ENCODE measurements at regions of chr22 and their contacts with region 1.

Region 1: DNA sequence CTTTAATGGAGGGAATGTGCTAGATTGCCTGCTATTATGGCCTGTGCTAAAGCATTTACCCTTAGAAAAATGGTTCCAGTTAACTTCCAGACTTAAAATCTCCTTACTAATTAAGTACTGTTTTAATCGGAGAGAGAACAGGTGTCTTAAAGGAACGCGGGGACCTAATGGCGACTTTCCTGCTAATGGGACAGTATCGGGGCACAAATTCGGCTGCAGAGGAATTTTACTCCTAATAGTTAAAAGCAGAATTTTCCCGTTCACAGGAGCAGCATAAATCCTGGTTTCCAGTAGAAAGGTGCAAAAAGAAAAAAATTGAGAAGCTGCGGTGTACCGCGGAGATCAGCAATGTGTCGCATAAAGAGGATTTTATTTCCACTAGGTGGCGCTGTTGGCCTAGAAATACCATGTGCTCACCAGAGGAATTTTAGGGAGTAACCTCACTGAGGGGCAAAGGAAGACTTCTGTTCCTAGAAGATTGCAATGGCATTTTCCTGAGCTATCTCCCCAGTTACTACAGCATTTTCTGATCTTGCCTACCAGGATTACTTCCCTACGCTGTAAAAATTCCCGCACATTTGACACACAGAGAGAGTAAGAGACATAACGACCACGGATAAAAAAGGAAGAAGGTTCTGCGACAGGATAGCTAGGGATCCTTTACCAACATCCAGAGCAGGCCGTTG is 44.5 kb downstream of the ZNF280B start:
- DNase-seq: peak; percentile 57
- ATAC-seq: peak; percentile 88
- H3K4me3 ChIP-seq: no peak overlapping the region
- H3K27ac ChIP-seq: no peak overlapping the region
- H3K4me1 ChIP-seq: no peaks in the 10 kb centered on the region
- H3K27me3 ChIP-seq: peaks cover 1% of the 10 kb centered on the region; the same call in 1 of the 2 replicates
- CTCF ChIP-seq: peak; percentile 82
- POLR2A ChIP-seq: no peak
- RAD21 ChIP-seq: peak; percentile 83

Region 2: GRCh38 chr22:22144858-22145257 is 319.1 kb before region 1 on chr22:
- CTCF ChIA-PET with region 1: no interaction called
- POLR2A ChIA-PET with region 1: no interaction called
- dilution Hi-C with region 1: no loop called
- in situ Hi-C with region 1: no loop called
- intact Hi-C with region 1: no loop called
- DNase-seq: peak; percentile 24
- ATAC-seq: 0 out of 2 replicates have a peak, but pooled peaks have one; percentile 48
- H3K4me3 ChIP-seq: no peak overlapping the region
- H3K27ac ChIP-seq: no peak overlapping the region
- H3K4me1 ChIP-seq: no peaks in the 10 kb centered on the region
- H3K27me3 ChIP-seq: peaks cover 32% of the 10 kb centered on the region
- CTCF ChIP-seq: peak; percentile 41; the same call in 1 of the 2 replicates
- POLR2A ChIP-seq: no peak
- RAD21 ChIP-seq: peak; percentile 25; the same call in 1 of the 2 replicates

Region 3: DNA sequence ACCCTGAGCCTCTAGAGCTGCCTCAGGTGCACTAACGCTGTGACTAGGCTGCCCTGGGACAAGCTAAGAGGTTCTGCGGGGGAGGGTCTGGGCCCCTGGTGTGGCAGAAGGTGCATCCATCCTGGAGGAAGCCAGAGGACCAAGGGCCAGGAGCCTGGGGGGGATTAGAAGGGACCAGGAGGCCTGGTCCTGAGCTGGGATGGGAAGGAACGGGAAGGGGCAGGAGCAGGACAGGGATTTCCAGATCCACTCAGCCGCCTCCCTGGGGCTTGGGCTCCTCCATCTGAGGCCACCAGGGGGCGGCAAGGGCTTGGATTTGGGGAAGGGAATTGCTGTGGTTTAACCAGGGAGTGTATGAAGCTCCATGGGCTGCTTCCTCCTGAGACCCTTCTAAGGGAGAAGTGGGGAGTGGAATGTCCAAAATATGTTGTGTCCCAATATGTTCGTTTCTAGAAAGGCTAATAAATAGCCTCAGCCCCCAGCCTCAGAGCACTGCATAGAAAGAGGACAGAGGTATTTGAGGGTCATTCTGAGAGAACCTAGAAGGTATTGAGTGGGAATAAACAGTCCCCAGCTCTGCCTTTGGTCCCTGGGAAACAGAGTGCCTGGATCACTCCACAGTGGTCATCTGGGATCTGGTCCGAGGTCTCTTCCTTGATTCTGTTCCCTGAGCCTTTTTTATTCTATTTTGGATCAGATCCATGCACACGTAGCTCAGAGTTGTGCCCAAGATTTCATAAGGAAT is 112.4 kb after region 1 on chr22:
- CTCF ChIA-PET with region 1: no interaction called
- POLR2A ChIA-PET with region 1: no interaction called
- dilution Hi-C with region 1: no loop called
- in situ Hi-C with region 1: loop called (anchors 10 kb)
- intact Hi-C with region 1: no loop called
- DNase-seq: peak; percentile 24
- ATAC-seq: peak; percentile 88
- H3K4me3 ChIP-seq: no peak overlapping the region
- H3K27ac ChIP-seq: no peak overlapping the region
- H3K4me1 ChIP-seq: no peaks in the 10 kb centered on the region
- H3K27me3 ChIP-seq: peaks cover 7% of the 10 kb centered on the region
- CTCF ChIP-seq: peak; percentile 72
- POLR2A ChIP-seq: no peak
- RAD21 ChIP-seq: peak; percentile 52

Region 4: DNA sequence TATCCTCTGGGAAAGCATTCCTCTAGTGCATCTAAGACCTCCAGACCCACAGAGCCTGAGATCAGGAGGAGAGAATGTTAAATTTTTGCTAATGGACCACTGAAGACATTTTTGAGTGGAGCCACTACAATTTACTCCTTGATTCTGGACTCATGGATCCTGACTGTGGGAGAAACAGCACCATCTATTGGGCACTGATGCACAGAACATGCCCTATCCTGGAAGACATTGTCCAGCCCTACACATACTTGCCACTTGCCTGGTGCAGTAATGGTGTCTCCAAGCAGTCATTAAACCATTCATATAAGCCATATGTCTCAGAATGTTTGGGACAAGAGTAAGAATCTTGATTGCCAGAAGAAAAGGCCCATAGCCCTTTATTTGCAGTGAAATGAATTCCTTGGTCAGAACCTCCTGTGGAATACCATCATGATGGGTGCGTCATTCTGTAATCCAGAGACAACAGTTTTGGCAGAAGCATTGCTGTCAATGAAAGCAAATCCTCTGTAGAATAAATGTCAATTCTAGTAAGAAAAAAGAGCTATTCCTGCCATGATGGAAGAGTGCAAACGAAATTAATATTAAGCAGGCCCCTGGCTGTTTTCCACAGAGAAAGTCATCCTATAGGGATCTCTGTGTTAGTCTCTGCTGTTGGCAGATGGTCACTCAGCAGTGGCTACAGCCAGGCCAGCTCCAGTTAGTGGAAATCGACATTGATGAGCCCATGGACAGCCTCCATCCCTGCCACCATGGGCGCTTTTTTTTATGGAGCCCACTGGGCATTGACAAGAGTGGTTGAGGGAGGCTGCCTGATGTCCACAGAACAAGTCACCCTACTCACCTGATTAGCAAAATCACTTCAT is 223.9 kb after region 1 on chr22:
- CTCF ChIA-PET with region 1: no interaction called
- POLR2A ChIA-PET with region 1: no interaction called
- dilution Hi-C with region 1: no loop called
- in situ Hi-C with region 1: no loop called
- intact Hi-C with region 1: loop called (anchors 1 kb)
- DNase-seq: peak; percentile 65
- ATAC-seq: peak; percentile 79
- H3K4me3 ChIP-seq: no peak overlapping the region
- H3K27ac ChIP-seq: no peak overlapping the region
- H3K4me1 ChIP-seq: peaks cover 21% of the 10 kb centered on the region
- H3K27me3 ChIP-seq: no peaks in the 10 kb centered on the region; the same call in none of the 2 replicates
- CTCF ChIP-seq: peak; percentile 84
- POLR2A ChIP-seq: no peak
- RAD21 ChIP-seq: peak; percentile 81

Region 5: GRCh38 chr22:22863001-22863400 is 399.0 kb after region 1 on chr22:
- CTCF ChIA-PET with region 1: no interaction called
- POLR2A ChIA-PET with region 1: no interaction called
- dilution Hi-C with region 1: no loop called
- in situ Hi-C with region 1: no loop called
- intact Hi-C with region 1: loop called (anchors 5 kb)
- DNase-seq: no peak
- ATAC-seq: no peak
- H3K4me3 ChIP-seq: no peak overlapping the region
- H3K27ac ChIP-seq: no peak overlapping the region
- H3K4me1 ChIP-seq: no peaks in the 10 kb centered on the region
- H3K27me3 ChIP-seq: peaks cover 13% of the 10 kb centered on the region
- CTCF ChIP-seq: no peak
- POLR2A ChIP-seq: no peak
- RAD21 ChIP-seq: no peak

Region 6: GRCh38 chr22:22942511-22943329 is 478.7 kb after region 1 on chr22:
- CTCF ChIA-PET with region 1: no interaction called
- POLR2A ChIA-PET with region 1: no interaction called
- dilution Hi-C with region 1: no loop called
- in situ Hi-C with region 1: loop called (anchors 10 kb)
- intact Hi-C with region 1: no loop called
- DNase-seq: peak; percentile 51
- ATAC-seq: peak; percentile 72
- H3K4me3 ChIP-seq: no peak overlapping the region
- H3K27ac ChIP-seq: no peak overlapping the region
- H3K4me1 ChIP-seq: no peaks in the 10 kb centered on the region
- H3K27me3 ChIP-seq: peaks cover 2% of the 10 kb centered on the region; the same call in 1 of the 2 replicates
- CTCF ChIP-seq: peak; percentile 57
- POLR2A ChIP-seq: no peak
- RAD21 ChIP-seq: peak; percentile 49

Region 7: DNA sequence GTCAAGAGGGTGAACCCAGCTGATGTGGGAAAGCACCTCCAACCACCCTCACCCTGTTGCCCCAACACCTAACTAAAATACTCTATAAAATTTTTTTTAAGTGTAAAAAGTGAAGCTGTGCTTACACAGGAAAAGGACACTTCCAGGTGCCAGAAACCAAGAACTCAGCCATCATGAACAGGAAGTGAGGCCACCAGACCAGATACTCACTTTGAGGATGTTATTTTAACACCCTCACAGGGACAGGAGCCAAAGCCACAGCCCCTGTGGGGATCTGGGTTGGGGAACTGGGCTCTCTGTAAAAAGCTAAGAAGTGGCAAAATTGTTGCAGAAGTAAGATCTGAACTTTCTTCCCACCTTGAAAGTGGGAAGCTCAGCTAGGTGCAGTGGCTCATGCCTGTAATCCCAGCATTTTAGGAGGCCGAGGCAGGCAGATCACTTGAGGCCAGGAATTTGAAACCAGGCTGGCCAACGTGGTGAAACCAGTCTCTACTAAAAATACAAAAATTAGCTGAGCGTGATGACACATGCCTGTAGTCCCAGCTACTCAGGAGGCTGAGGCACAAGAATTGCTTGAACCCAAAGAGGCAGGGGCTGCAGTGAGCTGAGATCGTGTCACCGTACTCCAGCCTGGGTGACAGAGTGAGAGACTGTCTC is 674.0 kb after region 1 on chr22:
- CTCF ChIA-PET with region 1: no interaction called
- POLR2A ChIA-PET with region 1: no interaction called
- dilution Hi-C with region 1: no loop called
- in situ Hi-C with region 1: no loop called
- intact Hi-C with region 1: loop called (anchors 10 kb)
- DNase-seq: no peak
- ATAC-seq: no peak
- H3K4me3 ChIP-seq: no peak overlapping the region
- H3K27ac ChIP-seq: no peak overlapping the region
- H3K4me1 ChIP-seq: 0 out of 2 replicates have a peak, but pooled peaks cover 4% of the 10 kb centered on the region
- H3K27me3 ChIP-seq: peaks cover 6% of the 10 kb centered on the region
- CTCF ChIP-seq: no peak
- POLR2A ChIP-seq: no peak
- RAD21 ChIP-seq: no peak